Posterior vena cava (tissue), 2 donors: ENCODE measurements at regions of chr17 and their contacts with region 1.

Region 1: DNA sequence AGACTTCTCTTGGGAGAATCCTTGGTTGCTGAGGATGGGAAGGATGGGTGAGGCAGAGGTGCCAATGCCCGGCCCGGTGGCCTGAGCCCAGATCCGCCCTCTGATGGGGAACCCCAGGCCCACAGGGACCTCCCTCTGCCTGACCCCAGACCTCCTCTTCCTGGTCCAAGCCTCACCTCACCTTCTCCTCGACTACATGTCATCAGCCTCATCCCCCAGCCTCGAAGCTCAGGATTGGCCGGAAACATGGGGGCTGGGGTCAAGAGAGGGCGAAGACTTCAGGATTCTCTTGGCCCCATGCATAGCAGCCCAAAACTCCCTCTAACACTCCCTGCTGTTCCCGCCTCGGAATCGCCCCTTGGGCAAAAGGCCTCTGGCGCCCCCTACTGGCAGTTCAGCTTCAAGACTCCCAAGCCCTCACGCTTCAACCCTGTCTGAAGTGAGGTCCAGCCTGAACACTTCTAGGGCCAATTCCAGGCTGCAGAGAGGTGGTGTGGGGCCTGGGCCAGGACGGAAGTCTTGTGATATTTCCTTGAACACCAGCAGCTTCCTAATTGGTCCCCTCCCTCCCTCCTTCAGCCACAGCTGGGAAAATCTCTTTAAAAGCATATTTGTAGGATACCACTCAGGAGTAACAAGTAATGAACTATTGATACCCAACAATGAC is 47.2 kb downstream of the ARHGAP27 start:
- DNase-seq: peak; percentile 96

Region 2: GRCh38 chr17:44850612-44851011 is 534.9 kb before region 1 on chr17:
- intact Hi-C with region 1: no loop called
- DNase-seq: peak; percentile 47

Region 3: DNA sequence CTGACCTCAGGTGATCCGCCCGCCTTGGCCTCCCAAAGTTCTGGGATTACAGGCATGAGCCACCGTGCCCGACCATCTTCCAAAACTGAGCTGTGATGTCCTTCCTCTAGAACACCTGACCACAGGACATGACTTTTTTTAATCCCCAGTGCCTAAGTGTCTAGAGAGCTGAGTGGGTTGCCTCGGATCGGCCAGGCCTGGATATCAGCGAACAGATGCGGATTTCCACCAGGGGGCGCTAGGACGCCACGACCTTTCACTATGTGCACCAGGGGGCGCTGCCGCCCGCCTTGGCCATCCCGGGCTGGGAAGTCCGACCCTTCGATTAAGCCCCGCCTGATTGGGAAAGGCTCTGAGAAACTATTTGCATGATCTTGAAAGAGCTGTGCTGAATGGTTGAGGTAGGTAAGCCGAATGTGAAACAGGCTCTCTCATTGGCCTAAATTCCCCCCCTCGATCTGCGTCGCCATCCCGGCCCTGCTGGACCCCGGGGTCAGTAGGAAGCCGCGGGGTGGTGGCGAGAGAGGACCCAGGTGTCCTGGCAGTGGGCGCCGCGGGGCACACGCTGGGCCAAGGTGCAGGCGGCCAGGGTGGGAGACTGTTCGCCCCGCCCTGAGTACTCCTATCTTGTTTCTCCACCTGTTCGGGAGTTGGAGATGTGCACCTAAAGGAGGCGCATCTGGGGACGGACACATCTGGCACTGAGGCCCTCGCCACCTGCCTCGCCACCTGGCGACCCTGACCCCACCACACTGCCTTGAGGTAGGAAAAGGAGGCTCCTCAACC is 250.1 kb before region 1 on chr17 and contains the start of gene ACBD4:
- intact Hi-C with region 1: loop called in 1 of 2 experiments (anchors 10 kb)
- DNase-seq: peak; percentile 99
- total RNA-seq, gene ACBD4: 10.8 to 12.9 TPM

Region 4: GRCh38 chr17:45218895-45219661 is 166.4 kb before region 1 on chr17:
- intact Hi-C with region 1: loop called (anchors 5 kb)
- DNase-seq: peak; percentile 95

Region 5: DNA sequence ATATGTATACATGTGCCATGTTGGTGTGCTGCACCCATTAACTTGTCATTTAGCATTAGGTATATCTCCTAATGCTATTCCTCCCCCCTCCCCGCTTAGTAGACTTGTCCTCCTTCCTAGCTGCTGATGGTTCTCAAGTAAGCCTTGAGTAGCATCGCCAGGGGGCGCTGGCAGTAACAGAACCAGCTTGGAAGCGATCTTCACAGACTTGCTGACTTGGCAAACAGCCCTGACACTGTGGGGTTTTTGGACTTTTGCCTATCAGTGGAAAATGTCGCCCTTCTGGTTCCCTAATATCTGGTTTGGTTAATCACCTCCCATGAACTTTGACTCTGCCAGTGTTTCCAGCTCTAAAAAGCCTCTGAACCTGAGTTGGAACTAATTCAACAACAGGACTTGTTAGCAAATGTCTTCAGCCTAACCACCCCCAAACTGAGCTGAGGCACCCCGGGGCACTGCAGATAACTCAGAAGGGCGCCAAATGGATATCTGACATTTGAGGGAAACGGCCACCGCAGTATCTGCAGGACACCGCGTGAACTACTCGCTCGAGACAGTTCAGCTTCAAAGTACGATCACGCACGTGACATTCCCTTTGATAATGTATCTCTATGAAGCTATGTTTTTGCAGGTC is 108.1 kb before region 1 on chr17:
- intact Hi-C with region 1: loop called (anchors 2 to 5 kb)
- DNase-seq: peak; percentile 98